H1 (cell line): ENCODE measurements at regions of chr11 and their contacts with region 1.

Region 1: DNA sequence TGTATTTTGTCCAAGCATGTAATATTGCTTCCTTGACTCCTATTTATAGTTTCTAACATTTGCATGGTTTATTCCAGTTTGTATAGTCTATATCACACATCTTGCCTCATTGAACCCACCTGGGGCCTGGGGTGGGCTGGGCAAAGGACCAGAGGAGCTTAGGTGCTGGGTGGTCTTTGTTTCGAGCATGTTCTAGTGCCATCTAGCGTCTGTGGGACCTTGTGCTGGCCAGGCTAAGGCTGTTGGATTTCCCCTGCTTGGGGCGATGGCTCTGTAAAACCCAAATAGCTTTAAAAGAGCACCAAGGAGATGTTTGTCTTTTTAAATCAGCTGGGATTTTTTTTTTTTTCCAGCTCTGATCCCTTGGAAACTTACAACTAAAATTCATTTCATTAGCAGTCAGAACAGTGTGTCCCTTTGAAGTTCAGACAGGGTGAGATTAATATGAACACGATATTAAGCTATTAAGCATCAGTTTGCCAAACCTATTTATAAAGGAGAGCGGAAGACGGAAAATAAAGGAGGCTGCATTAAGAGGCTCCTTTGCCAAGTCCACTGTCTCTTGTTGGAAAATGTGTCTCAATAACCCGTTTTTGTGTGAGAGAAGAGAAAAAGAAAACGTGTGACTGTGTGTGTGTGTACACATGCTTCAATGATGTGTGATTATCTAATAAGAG is 157.4 kb downstream of the COMMD9 start:
- DNase-seq: peak in 1 of 2 experiments; percentile 66
- H3K4me3 ChIP-seq: no peak overlapping the region
- H3K27ac ChIP-seq: no peak overlapping the region
- H3K4me1 ChIP-seq: peaks cover 1 to 7% (median 5%) of the 10 kb centered on the region in 4 experiments; a peak in 4 of 7 replicates
- H3K27me3 ChIP-seq: no peaks in the 10 kb centered on the region
- CTCF ChIP-seq: peak; percentile 79 to 87 (median 84)
- EP300 ChIP-seq: no peak
- POLR2A ChIP-seq: no peak
- RAD21 ChIP-seq: peak; percentile 89 to 93

Region 2: GRCh38 chr11:35838071-35838470 is 293.8 kb before region 1 on chr11:
- CTCF ChIA-PET with region 1: interaction called, 10 read pairs
- POLR2A ChIA-PET with region 1: no interaction called
- DNase-seq: no peak
- H3K4me3 ChIP-seq: no peak overlapping the region
- H3K27ac ChIP-seq: no peak overlapping the region
- H3K4me1 ChIP-seq: no peaks in the 10 kb centered on the region
- H3K27me3 ChIP-seq: no peaks in the 10 kb centered on the region
- CTCF ChIP-seq: no peak
- EP300 ChIP-seq: no peak
- POLR2A ChIP-seq: no peak
- RAD21 ChIP-seq: no peak

Region 3: GRCh38 chr11:36056160-36056751 is 75.6 kb before region 1 on chr11:
- CTCF ChIA-PET with region 1: interaction called, 21 read pairs
- POLR2A ChIA-PET with region 1: no interaction called
- DNase-seq: peak in 1 of 2 experiments; percentile 74
- H3K4me3 ChIP-seq: no peak overlapping the region
- H3K27ac ChIP-seq: no peak overlapping the region
- H3K4me1 ChIP-seq: peaks cover 0 to 14% (median 4%) of the 10 kb centered on the region in 4 experiments; a peak in 3 of 7 replicates
- H3K27me3 ChIP-seq: no peaks in the 10 kb centered on the region
- CTCF ChIP-seq: peak; percentile 85 to 94 (median 88)
- EP300 ChIP-seq: no peak
- POLR2A ChIP-seq: no peak
- RAD21 ChIP-seq: peak; percentile 85 to 89

Region 4: GRCh38 chr11:36091256-36091811 is 40.5 kb before region 1 on chr11:
- CTCF ChIA-PET with region 1: interaction called, 15 read pairs
- POLR2A ChIA-PET with region 1: interaction called, 3 read pairs
- DNase-seq: no peak
- H3K4me3 ChIP-seq: no peak overlapping the region
- H3K27ac ChIP-seq: peak overlapping the region; percentile 52; the same call in 1 of the 2 replicates
- H3K4me1 ChIP-seq: peaks cover 6 to 33% (median 24%) of the 10 kb centered on the region in 4 experiments; a peak in 5 of 7 replicates
- H3K27me3 ChIP-seq: no peaks in the 10 kb centered on the region
- CTCF ChIP-seq: no peak
- EP300 ChIP-seq: no peak
- POLR2A ChIP-seq: no peak
- RAD21 ChIP-seq: no peak

Region 5: DNA sequence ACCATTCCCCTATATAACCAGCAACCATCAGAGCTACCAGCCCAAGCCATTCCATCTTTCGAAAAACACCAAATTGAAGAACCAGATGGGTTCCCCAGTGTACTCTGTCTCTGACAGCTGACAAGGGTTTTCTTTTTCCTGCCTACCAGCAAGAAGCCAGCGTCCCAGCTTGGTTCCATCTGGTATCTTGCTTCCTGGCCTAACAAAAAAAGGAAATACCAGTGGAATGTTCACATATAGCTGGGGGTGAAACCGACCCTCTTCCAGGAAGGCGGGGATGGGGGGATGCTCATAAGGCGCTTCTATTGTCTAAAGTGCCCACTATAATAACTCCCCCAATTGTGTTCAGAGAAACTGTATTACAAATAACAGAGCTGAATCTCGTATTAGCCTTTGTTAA is 15.7 kb before region 1 on chr11:
- CTCF ChIA-PET with region 1: interaction called, 25 read pairs
- POLR2A ChIA-PET with region 1: interaction called, 8 read pairs
- DNase-seq: no peak
- H3K4me3 ChIP-seq: no peak overlapping the region
- H3K27ac ChIP-seq: no peak overlapping the region
- H3K4me1 ChIP-seq: peaks cover 1 to 9% (median 4%) of the 10 kb centered on the region in 4 experiments
- H3K27me3 ChIP-seq: no peaks in the 10 kb centered on the region
- CTCF ChIP-seq: no peak
- EP300 ChIP-seq: no peak
- POLR2A ChIP-seq: no peak
- RAD21 ChIP-seq: no peak

Region 6: GRCh38 chr11:36156161-36156816 is 24.4 kb after region 1 on chr11:
- CTCF ChIA-PET with region 1: interaction called, 10 read pairs
- POLR2A ChIA-PET with region 1: no interaction called
- DNase-seq: no peak
- H3K4me3 ChIP-seq: no peak overlapping the region
- H3K27ac ChIP-seq: no peak overlapping the region
- H3K4me1 ChIP-seq: peaks cover 0 to 11% (median 3%) of the 10 kb centered on the region in 4 experiments; a peak in 3 of 7 replicates
- H3K27me3 ChIP-seq: no peaks in the 10 kb centered on the region
- CTCF ChIP-seq: peak in 1 of 3 experiments; percentile 11; a peak in 1 of 4 replicates
- EP300 ChIP-seq: no peak
- POLR2A ChIP-seq: no peak
- RAD21 ChIP-seq: peak in 1 of 2 experiments; percentile 17; a peak in 2 of 4 replicates

Region 7: GRCh38 chr11:36196411-36196998 is 64.6 kb after region 1 on chr11:
- CTCF ChIA-PET with region 1: no interaction called
- POLR2A ChIA-PET with region 1: no interaction called
- DNase-seq: no peak
- H3K4me3 ChIP-seq: no peak overlapping the region
- H3K27ac ChIP-seq: no peak overlapping the region
- H3K4me1 ChIP-seq: peaks cover 0 to 16% (median 9%) of the 10 kb centered on the region in 4 experiments; a peak in 4 of 7 replicates
- H3K27me3 ChIP-seq: no peaks in the 10 kb centered on the region
- CTCF ChIP-seq: no peak
- EP300 ChIP-seq: no peak
- POLR2A ChIP-seq: no peak
- RAD21 ChIP-seq: no peak